Esophagus squamous epithelium (tissue), 5 donors: ENCODE measurements at regions of chr1 and their contacts with region 1.

Region 1: DNA sequence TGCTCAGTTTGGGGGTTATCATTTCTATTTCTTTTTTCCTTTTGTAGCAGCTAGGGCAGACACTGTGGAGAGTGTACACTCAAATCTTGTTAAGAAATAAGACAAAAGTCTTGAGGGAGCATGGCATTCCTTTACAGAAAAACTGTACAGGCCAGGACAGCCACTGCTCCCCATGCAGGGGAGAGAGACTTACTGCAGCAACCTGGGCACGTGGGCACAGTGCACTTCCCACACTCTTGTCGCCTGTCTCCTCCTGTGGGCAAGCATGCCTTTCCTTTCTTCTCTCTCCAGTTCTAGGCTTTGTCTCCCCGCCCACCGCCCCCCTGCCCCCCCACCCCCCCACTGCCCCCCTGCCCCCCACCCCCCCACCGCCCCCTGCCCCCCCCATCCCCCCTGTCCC is 51.9 kb downstream of the PHC2 start:
- DNase-seq: no peak
- H3K4me3 ChIP-seq: no peak overlapping the region
- H3K27ac ChIP-seq: no peak overlapping the region
- H3K4me1 ChIP-seq: peaks cover 5 to 44% (median 12%) of the 10 kb centered on the region in 3 donors
- H3K27me3 ChIP-seq: no peaks in the 10 kb centered on the region
- CTCF ChIP-seq: no peak
- POLR2A ChIP-seq: no peak

Region 2: DNA sequence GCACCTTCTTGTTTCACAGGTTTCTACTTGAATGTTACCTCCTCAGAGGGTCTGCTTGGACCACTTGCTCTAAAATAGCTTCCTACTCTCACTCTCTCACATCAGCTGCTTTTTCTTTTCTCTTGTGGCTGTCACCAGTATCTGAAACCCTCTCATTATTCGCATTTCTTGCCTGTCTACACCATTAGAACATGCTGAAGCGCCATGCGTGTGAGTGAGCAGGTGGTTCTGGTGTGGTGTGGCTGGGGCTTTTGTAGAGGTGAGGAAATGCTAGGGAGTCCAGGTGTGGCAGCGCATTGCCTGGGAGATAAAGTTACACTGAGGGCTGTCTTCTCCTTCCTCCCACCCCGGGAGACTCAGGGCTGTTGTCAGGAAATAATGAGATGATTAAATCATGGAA is 118.5 kb before region 1 on chr1:
- intact Hi-C with region 1: no loop called
- DNase-seq: no peak
- H3K4me3 ChIP-seq: no peak overlapping the region
- H3K27ac ChIP-seq: no peak overlapping the region
- H3K4me1 ChIP-seq: peaks cover 22 to 85% (median 24%) of the 10 kb centered on the region in 3 donors
- H3K27me3 ChIP-seq: no peaks in the 10 kb centered on the region
- CTCF ChIP-seq: no peak
- POLR2A ChIP-seq: no peak

Region 3: GRCh38 chr1:33273406-33273805 is 105.6 kb before region 1 on chr1:
- intact Hi-C with region 1: no loop called
- DNase-seq: no peak
- H3K4me3 ChIP-seq: no peak overlapping the region
- H3K27ac ChIP-seq: no peak overlapping the region
- H3K4me1 ChIP-seq: peaks cover 4 to 48% (median 5%) of the 10 kb centered on the region in 3 donors
- H3K27me3 ChIP-seq: no peaks in the 10 kb centered on the region
- CTCF ChIP-seq: no peak
- POLR2A ChIP-seq: no peak

Region 4: GRCh38 chr1:33327587-33328315 is 51.2 kb before region 1 on chr1:
- intact Hi-C with region 1: no loop called
- DNase-seq: no peak
- H3K4me3 ChIP-seq: no peak overlapping the region
- H3K27ac ChIP-seq: peak overlapping the region in 3 of 4 donors; percentile 0 to 71 (median 16)
- H3K4me1 ChIP-seq: peaks cover 0 to 68% (median 30%) of the 10 kb centered on the region in 3 donors
- H3K27me3 ChIP-seq: no peaks in the 10 kb centered on the region
- CTCF ChIP-seq: no peak
- POLR2A ChIP-seq: no peak

Region 5: DNA sequence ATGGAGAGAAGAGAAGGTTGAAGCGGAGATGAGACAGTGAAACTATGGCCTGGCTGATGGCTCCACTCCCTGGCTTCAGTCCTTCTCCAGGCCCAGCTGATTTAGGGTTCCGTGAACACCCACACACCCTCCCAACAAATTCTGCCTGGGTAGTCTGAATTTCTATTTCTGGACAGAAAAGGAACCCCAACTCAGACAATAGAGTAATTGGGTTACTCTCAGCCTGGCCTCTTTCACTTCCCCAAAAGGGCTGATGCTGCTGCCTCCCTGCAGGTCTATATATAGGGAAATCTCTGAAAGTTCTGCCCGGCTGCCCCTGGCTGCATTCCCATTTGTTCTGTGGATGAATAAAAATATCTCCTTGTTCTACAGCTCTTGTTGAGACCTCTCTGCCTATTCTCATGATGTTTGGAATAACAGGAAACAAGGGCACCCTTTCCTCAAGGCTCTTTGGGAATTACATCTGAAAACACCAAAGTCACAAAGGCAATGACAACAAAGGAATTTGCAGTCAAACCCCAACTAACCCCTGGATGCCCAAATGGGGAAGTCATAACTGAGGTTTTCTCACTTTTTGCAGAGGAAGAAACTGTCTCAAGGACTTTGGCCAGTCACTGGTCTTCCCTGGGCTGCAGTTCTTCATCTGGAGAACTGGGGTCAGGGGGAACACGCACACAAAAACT is 82.1 kb after region 1 on chr1:
- intact Hi-C with region 1: loop called (anchors 10 kb)
- DNase-seq: no peak
- H3K4me3 ChIP-seq: no peak overlapping the region
- H3K27ac ChIP-seq: peak overlapping the region; percentile 39 to 84 (median 74)
- H3K4me1 ChIP-seq: peaks cover 0 to 53% (median 18%) of the 10 kb centered on the region in 3 donors
- H3K27me3 ChIP-seq: no peaks in the 10 kb centered on the region
- CTCF ChIP-seq: no peak
- POLR2A ChIP-seq: no peak